Naive thymus-derived CD8-positive, alpha-beta T cell (primary cell): ENCODE measurements at regions of chr5 and their contacts with region 1.

Region 1: GRCh38 chr5:131252824-131253171 is 11.1 kb upstream of the CDC42SE2 start:
- DNase-seq: peak; percentile 57 to 91 (median 81)
- ATAC-seq: peak; percentile 79 to 89
- H3K4me3 Mint-ChIP-seq: peak overlapping the region; percentile 81 to 98 (median 94)
- H3K27ac Mint-ChIP-seq: peak overlapping the region; percentile 85 to 100 (median 96)
- H3K4me1 Mint-ChIP-seq: peaks cover 30 to 81% (median 74%) of the 10 kb centered on the region in 4 donors
- H3K27me3 Mint-ChIP-seq: no peaks in the 10 kb centered on the region

Region 2: GRCh38 chr5:131165119-131165727 is 87.6 kb before region 1 on chr5 and contains the start of gene HINT1:
- POLR2A ChIA-PET with region 1: interaction called, 12 read pairs
- DNase-seq: peak; percentile 84 to 95 (median 92)
- ATAC-seq: peak; percentile 83 to 84
- H3K4me3 Mint-ChIP-seq: peak within 1 kb of the TSS; percentile 89 to 99 (median 96)
- H3K27ac Mint-ChIP-seq: peak within 1 kb of the TSS; percentile 86 to 99 (median 97)
- H3K4me1 Mint-ChIP-seq: peaks cover 20 to 50% (median 44%) of the 10 kb centered on the region in 4 donors
- H3K27me3 Mint-ChIP-seq: no peaks in the 10 kb centered on the region
- polyA plus RNA-seq, gene HINT1: 366 to 428 (median 408) TPM

Region 3: GRCh38 chr5:131209506-131210150 is 43.2 kb before region 1 on chr5:
- POLR2A ChIA-PET with region 1: interaction called, 33 read pairs
- DNase-seq: peak; percentile 8 to 90 (median 73)
- ATAC-seq: peak; percentile 90 to 94
- H3K4me3 Mint-ChIP-seq: peak overlapping the region; percentile 68 to 91 (median 82)
- H3K27ac Mint-ChIP-seq: peak overlapping the region; percentile 88 to 99 (median 96)
- H3K4me1 Mint-ChIP-seq: peaks cover 28 to 69% (median 59%) of the 10 kb centered on the region in 4 donors
- H3K27me3 Mint-ChIP-seq: no peaks in the 10 kb centered on the region

Region 4: DNA sequence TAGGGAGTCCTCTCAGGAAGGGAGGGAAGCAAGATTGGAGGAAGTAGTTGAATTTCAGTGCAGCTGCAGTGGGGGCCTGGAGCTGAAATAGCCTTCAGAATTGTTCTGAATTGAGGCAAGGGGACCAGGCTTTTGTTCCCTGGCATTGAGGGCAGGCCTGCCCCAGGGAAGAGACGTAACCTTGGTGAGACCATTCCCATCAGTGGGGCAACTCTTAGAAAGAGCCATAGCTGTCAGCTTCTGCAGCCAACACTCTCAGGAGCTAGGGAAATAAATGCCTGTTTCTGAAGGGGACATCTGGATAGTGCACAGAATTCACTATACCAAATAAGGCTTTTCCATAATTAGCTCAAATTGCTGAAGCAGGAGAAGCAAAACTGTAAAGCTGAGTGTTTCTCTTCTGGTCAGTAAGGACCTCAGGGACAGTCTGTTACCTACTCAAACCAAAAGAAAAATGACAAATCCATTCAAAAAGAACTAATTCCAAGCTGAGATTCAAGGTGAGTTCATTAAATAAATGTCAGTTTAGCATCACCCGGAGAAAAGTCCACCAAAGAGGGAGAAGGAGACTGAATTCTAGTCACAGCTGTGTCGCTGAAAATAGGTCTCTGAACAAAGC is 38.1 kb before region 1 on chr5:
- POLR2A ChIA-PET with region 1: interaction called, 33 read pairs
- DNase-seq: no peak
- ATAC-seq: no peak
- H3K4me3 Mint-ChIP-seq: peak overlapping the region in 4 of 10 donors; percentile 37 to 67 (median 54)
- H3K27ac Mint-ChIP-seq: peak overlapping the region in 8 of 10 donors; percentile 1 to 77 (median 52)
- H3K4me1 Mint-ChIP-seq: peaks cover 21 to 74% (median 49%) of the 10 kb centered on the region in 4 donors
- H3K27me3 Mint-ChIP-seq: no peaks in the 10 kb centered on the region

Region 5: GRCh38 chr5:131270809-131271208 is 18.0 kb after region 1 on chr5:
- POLR2A ChIA-PET with region 1: interaction called, 159 read pairs
- DNase-seq: no peak
- ATAC-seq: no peak
- H3K4me3 Mint-ChIP-seq: peak overlapping the region; percentile 73 to 98 (median 88)
- H3K27ac Mint-ChIP-seq: peak overlapping the region; percentile 91 to 98 (median 94)
- H3K4me1 Mint-ChIP-seq: peaks cover 34 to 86% (median 66%) of the 10 kb centered on the region in 4 donors
- H3K27me3 Mint-ChIP-seq: no peaks in the 10 kb centered on the region

Region 6: DNA sequence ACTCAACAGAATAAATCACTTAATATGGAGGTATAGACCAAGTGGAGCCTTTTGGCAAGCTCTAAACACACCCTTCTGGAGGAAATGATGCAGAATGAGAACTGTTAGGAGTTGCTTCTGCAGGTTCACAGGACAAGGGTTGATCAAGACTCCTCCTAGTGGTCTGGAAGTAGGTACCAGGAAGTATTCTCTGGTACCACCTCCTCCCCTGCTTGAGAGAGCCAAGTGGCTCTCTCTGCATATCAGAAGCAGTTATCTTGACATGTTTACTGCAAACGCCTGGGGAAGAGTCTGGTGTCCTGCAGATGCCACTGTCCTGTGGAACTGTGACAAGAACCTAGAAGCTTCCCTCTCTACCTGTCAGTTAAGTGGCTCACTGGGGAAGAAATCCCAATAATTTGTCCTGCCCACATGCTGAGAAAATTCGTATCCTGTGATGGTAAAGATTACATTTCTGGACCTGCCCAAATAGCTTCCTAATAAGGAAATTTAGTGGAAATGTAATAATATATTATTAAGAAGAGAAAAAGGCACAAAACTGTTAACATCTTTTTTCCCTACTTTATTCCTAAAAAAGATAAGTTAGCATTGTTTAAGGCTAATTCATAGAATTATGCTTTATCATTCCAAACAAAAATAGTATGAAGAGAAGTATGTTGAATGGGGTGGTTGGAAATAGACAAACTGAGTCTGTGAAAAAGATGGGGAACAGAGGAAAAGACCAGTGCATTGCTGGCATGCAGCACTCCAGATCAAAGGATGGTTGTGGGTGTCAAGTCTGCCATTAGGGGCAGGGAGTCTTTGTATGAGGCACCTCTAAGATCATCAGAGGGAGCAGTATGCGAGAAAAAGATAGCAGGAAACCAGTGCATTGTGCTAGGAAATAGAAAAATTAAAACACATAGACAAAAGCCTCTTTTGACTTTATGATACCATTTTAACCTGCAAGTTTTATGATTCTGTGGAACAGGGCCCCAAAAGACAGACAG is 129.9 kb after region 1 on chr5:
- POLR2A ChIA-PET with region 1: interaction called, 11 read pairs
- DNase-seq: peak in 9 of 10 donors; percentile 36 to 86 (median 67)
- ATAC-seq: peak; percentile 57 to 68
- H3K4me3 Mint-ChIP-seq: peak overlapping the region; percentile 47 to 84 (median 71)
- H3K27ac Mint-ChIP-seq: peak overlapping the region; percentile 97 to 100 (median 99)
- H3K4me1 Mint-ChIP-seq: peaks cover 41 to 93% (median 89%) of the 10 kb centered on the region in 4 donors
- H3K27me3 Mint-ChIP-seq: no peaks in the 10 kb centered on the region